ENCODE measurements at regions of chr14 and their contacts with region 1.

Region 1: GRCh38 chr14:69107407-69108003 is 45.4 kb downstream of the DCAF5 start:
- DNase-seq: no peak
- ATAC-seq: peak; percentile 76

Region 2: GRCh38 chr14:68862954-68863594 is 244.4 kb before region 1 on chr14:
- intact Hi-C with region 1: loop called (anchors 5 kb)
- DNase-seq: peak; percentile 88
- ATAC-seq: peak; percentile 90

Region 3: GRCh38 chr14:68911594-68912227 is 195.8 kb before region 1 on chr14:
- intact Hi-C with region 1: loop called (anchors 10 kb)
- DNase-seq: peak; percentile 77
- ATAC-seq: peak; percentile 93

Region 4: DNA sequence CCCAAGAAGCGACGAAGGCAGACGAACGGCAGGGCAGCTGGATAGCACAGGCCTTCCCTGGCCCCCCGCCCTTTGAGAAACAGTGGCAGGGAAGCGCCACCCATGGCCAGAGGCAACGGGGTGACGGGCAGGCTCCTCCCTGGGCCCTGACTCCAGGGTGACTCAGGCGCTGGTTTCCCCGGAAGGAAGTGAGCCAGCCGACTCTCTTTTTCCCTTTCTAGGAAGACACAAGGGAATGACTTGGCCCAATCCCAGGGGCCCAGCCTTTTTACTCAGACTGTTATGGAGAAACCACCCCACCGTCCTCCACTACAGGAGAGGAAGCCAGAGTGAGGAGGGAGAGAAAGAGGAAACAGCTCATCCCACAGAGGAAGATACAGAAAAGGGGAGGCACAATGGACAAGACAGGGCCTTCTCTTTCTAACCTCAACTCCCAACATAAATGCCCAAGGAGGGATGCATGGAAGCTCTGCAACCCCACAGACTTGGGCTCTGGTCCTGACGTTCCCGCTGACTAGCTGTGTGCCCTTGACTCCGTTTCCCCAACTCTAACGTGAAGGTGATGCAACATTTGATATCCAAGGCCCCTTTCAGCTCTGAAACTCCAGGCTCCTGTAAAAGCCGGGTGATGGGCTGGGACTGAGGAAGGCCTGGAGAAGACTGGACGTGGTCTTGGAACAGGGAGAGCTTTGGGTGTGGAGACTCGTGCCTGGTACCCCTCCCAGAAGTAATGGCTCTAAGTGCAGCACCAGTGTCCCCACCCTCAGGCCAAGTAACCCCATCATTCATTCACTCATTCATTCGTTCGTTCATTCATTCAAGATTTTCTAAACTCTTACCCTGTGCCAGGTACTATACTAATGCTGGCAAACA is 156.2 kb before region 1 on chr14:
- intact Hi-C with region 1: no loop called
- DNase-seq: peak; percentile 86
- ATAC-seq: peak; percentile 23

Region 5: DNA sequence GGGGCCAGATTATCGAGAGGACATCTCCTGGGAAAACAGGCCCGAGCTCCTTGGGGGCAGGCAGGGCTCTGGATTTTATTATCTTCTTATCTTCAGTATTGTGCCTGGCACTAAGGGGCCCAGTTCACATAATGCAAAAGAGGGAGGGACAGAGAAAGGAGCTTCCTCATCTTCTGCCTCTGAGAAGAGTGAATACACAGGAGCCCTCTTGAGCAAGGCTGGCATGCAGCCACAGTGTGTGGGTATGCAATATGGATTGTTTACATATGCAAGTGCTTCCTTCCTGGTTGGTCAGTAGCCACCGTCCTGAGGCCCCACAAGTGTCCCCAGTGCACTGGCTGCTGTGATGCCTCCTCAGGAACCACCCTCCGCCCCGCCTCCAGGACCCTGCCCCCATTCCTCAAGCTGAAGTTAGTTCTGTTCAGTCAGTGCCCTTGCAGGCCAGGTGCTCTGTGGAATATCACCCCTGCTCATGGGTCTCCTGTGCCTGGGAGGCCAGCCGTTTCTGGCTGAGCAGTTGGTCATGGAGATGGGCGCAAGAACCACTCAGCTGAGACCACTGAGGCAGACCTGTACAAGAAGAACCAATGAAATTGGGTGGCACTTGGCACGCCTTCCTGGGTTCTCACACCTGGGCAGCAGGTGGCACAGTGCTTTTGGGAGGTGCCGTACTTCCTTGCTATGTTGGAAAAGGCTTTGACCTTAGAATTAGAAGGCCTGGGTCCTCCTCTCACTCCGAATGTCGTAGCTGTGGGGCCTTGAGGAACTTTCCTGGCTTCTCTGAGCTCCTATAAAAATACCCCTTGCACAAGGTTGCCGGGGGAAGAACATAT is 93.3 kb before region 1 on chr14:
- intact Hi-C with region 1: no loop called
- DNase-seq: peak; percentile 87
- ATAC-seq: peak; percentile 48